GM12878 (cell line): ENCODE measurements at regions of chr11 and their contacts with region 1.

Region 1: DNA sequence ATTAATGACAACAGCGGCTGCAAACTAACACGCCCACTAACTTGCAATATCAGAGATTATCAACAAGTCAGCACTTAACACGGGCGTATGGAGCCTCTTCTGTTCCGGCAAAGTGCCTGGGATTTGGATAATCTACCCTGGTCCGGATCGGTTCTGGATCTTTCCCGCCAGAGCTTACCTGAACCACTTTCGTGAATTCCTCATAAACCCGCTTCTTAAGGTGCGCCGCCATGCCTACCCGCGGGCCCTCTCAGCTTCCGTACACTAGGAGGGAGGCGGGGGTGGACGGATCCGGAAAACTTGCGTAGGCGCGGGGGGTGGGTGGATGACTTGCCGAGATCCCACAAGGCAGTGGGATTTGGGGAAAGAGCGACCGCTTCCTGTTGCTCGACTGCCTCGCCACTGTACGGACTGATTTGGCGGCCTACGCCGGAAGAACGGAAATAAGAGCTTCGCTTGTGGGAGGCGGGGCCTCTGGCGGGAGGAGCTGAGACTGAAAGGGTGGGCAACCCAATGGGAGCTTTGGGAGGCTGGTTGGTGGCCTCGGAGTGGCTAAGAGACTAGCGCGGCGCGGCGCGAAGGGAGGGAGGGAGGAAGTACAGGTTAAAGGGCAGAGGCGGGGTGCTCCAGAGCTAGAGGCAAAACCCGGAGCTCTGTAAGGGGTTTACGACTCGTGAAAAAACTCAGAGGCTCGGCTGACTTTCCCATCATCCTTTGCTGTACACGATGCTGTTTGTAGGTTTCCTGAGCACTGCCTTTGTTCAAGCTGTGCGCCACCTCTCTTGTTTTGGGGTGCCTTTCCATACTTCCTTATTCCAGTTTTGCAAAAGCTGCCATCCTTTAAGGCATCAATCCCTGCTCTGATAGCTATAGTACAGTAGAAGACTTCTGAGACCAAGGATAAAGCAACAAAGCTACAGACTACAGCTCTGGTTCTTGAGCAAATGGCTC is at the start of gene INTS4:
- DNase-seq: peak; percentile 99
- ATAC-seq: peak; percentile 99
- H3K4me3 ChIP-seq: peak within 1 kb of the TSS; percentile 95
- H3K27ac ChIP-seq: peak within 1 kb of the TSS; percentile 77
- H3K4me1 ChIP-seq: peaks cover 3% of the 10 kb centered on the region; the same call in 1 of the 2 replicates
- H3K27me3 ChIP-seq: no peaks in the 10 kb centered on the region
- CTCF ChIP-seq: no peak
- EP300 ChIP-seq: 0 out of 4 replicates have a peak, but pooled peaks of 1 of the 2 experiments have one; percentile 28
- POLR2A ChIP-seq: peak; percentile 89
- RAD21 ChIP-seq: no peak
- polyA plus RNA-seq, gene INTS4: 20.2 to 24.3 TPM

Region 2: GRCh38 chr11:77776455-77776854 is 218.2 kb before region 1 on chr11:
- CTCF ChIA-PET with region 1: interaction called, 14 read pairs
- POLR2A ChIA-PET with region 1: no interaction called
- RAD21 ChIA-PET with region 1: interaction called, 4 read pairs
- SMC1A ChIA-PET with region 1: interaction called, 11 read pairs
- in situ Hi-C with region 1: no loop called
- intact Hi-C with region 1: no loop called
- DNase-seq: no peak
- ATAC-seq: peak; percentile 62
- H3K4me3 ChIP-seq: no peak overlapping the region
- H3K27ac ChIP-seq: no peak overlapping the region
- H3K4me1 ChIP-seq: no peaks in the 10 kb centered on the region
- H3K27me3 ChIP-seq: no peaks in the 10 kb centered on the region
- CTCF ChIP-seq: peak; percentile 3 to 46 (median 18); a peak in 4 of 6 replicates
- EP300 ChIP-seq: no peak
- POLR2A ChIP-seq: no peak
- RAD21 ChIP-seq: peak; percentile 50

Region 3: GRCh38 chr11:77820563-77821348 is 173.9 kb before region 1 on chr11 and contains the starts of genes AAMDC and RSF1:
- CTCF ChIA-PET with region 1: interaction called, 6 read pairs
- POLR2A ChIA-PET with region 1: interaction called, 5 read pairs
- RAD21 ChIA-PET with region 1: interaction called, 10 read pairs
- SMC1A ChIA-PET with region 1: interaction called, 6 read pairs
- in situ Hi-C with region 1: loop called (anchors 5 kb)
- intact Hi-C with region 1: loop called (anchors 2 kb)
- DNase-seq: peak; percentile 94
- ATAC-seq: peak; percentile 91
- H3K4me3 ChIP-seq: peak within 1 kb of the TSS; percentile 97
- H3K27ac ChIP-seq: peak within 1 kb of the TSS; percentile 89
- H3K4me1 ChIP-seq: peaks cover 3% of the 10 kb centered on the region; the same call in 1 of the 2 replicates
- H3K27me3 ChIP-seq: no peaks in the 10 kb centered on the region
- CTCF ChIP-seq: peak; percentile 67 to 82 (median 77)
- EP300 ChIP-seq: peak in 1 of 2 experiments; percentile 15; a peak in 1 of 4 replicates
- POLR2A ChIP-seq: peak; percentile 82
- RAD21 ChIP-seq: peak; percentile 55
- polyA plus RNA-seq, gene AAMDC: 37.1 to 38.3 TPM
- polyA plus RNA-seq, gene RSF1: 9.0 to 25.4 TPM

Region 4: GRCh38 chr11:77865805-77866204 is 128.9 kb before region 1 on chr11:
- CTCF ChIA-PET with region 1: no interaction called
- POLR2A ChIA-PET with region 1: no interaction called
- RAD21 ChIA-PET with region 1: no interaction called
- SMC1A ChIA-PET with region 1: no interaction called
- in situ Hi-C with region 1: no loop called
- intact Hi-C with region 1: no loop called
- DNase-seq: no peak
- ATAC-seq: no peak
- H3K4me3 ChIP-seq: no peak overlapping the region
- H3K27ac ChIP-seq: no peak overlapping the region
- H3K4me1 ChIP-seq: no peaks in the 10 kb centered on the region
- H3K27me3 ChIP-seq: no peaks in the 10 kb centered on the region
- CTCF ChIP-seq: no peak
- EP300 ChIP-seq: no peak
- POLR2A ChIP-seq: no peak
- RAD21 ChIP-seq: no peak

Region 5: DNA sequence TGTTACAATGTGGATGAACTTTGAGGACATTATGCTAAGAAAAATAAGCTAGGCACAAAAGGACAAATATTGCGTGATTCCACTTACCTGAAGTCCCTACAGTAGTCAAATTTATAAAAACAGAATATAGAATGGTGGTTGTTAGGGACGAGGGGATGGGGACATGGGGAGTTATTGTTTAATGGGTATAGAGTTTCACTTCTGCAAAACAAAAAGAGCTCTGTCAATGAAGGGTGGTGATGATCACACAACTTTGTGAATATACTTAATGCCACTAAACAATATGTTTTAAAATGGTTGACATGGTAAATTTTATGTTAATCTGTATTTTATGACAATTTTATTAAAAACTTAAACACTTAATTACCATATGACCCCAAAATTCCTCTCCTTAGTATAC is 26.4 kb before region 1 on chr11:
- CTCF ChIA-PET with region 1: interaction called, 8 read pairs
- POLR2A ChIA-PET with region 1: no interaction called
- RAD21 ChIA-PET with region 1: interaction called, 14 read pairs
- SMC1A ChIA-PET with region 1: interaction called, 3 read pairs
- in situ Hi-C with region 1: no loop called
- intact Hi-C with region 1: no loop called
- DNase-seq: peak; percentile 7
- ATAC-seq: peak; percentile 95
- H3K4me3 ChIP-seq: no peak overlapping the region
- H3K27ac ChIP-seq: no peak overlapping the region
- H3K4me1 ChIP-seq: no peaks in the 10 kb centered on the region; the same call in 1 of the 2 replicates
- H3K27me3 ChIP-seq: no peaks in the 10 kb centered on the region
- CTCF ChIP-seq: no peak
- EP300 ChIP-seq: no peak
- POLR2A ChIP-seq: no peak
- RAD21 ChIP-seq: no peak

Region 6: GRCh38 chr11:78045851-78046485 is 51.3 kb after region 1 on chr11:
- CTCF ChIA-PET with region 1: interaction called, 37 read pairs
- POLR2A ChIA-PET with region 1: interaction called, 3 read pairs
- RAD21 ChIA-PET with region 1: interaction called, 15 read pairs
- SMC1A ChIA-PET with region 1: interaction called, 8 read pairs
- in situ Hi-C with region 1: no loop called
- intact Hi-C with region 1: no loop called
- DNase-seq: no peak
- ATAC-seq: peak; percentile 99
- H3K4me3 ChIP-seq: peak overlapping the region; percentile 61; the same call in 1 of the 2 replicates
- H3K27ac ChIP-seq: no peak overlapping the region
- H3K4me1 ChIP-seq: no peaks in the 10 kb centered on the region
- H3K27me3 ChIP-seq: no peaks in the 10 kb centered on the region
- CTCF ChIP-seq: peak; percentile 96 to 99 (median 98)
- EP300 ChIP-seq: no peak
- POLR2A ChIP-seq: no peak
- RAD21 ChIP-seq: peak; percentile 83

Region 7: DNA sequence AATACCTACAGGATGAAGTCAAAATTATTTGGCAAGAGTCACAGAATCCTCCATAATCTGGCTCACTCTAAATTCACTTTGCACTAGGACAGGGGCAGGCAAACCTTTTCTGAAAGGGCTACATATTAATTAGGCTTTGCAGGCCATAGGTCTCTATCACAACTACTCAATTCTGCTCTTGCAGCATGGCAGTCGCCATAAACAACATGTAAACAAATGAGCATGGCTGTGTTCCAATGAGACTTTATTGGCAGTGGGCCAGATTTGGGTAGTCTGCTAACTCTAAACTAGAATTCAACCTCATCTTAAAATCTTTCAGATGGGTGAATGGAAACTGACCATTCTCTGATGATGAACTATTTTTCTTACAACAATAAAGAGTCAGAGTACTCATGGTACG is 74.8 kb after region 1 on chr11:
- CTCF ChIA-PET with region 1: no interaction called
- POLR2A ChIA-PET with region 1: no interaction called
- RAD21 ChIA-PET with region 1: no interaction called
- SMC1A ChIA-PET with region 1: no interaction called
- in situ Hi-C with region 1: no loop called
- intact Hi-C with region 1: no loop called
- DNase-seq: no peak
- ATAC-seq: no peak
- H3K4me3 ChIP-seq: no peak overlapping the region
- H3K27ac ChIP-seq: no peak overlapping the region
- H3K4me1 ChIP-seq: no peaks in the 10 kb centered on the region
- H3K27me3 ChIP-seq: no peaks in the 10 kb centered on the region
- CTCF ChIP-seq: no peak
- EP300 ChIP-seq: no peak
- POLR2A ChIP-seq: no peak
- RAD21 ChIP-seq: no peak

Region 8: GRCh38 chr11:78188286-78189173 is 193.8 kb after region 1 on chr11 and contains the starts of genes KCTD21 and USP35:
- CTCF ChIA-PET with region 1: no interaction called
- POLR2A ChIA-PET with region 1: interaction called, 3 read pairs
- RAD21 ChIA-PET with region 1: interaction called, 6 read pairs
- SMC1A ChIA-PET with region 1: no interaction called
- in situ Hi-C with region 1: no loop called
- intact Hi-C with region 1: loop called (anchors 10 kb)
- DNase-seq: peak; percentile 85
- ATAC-seq: peak; percentile 98
- H3K4me3 ChIP-seq: peak within 1 kb of the TSS; percentile 82
- H3K27ac ChIP-seq: 0 out of 2 replicates have a peak within 1 kb of the TSS, but pooled peaks have one; percentile 7
- H3K4me1 ChIP-seq: peaks cover 14% of the 10 kb centered on the region
- H3K27me3 ChIP-seq: no peaks in the 10 kb centered on the region
- CTCF ChIP-seq: no peak
- EP300 ChIP-seq: no peak
- POLR2A ChIP-seq: peak; percentile 80
- RAD21 ChIP-seq: no peak
- polyA plus RNA-seq, gene KCTD21: 0.63 to 0.73 TPM
- polyA plus RNA-seq, gene USP35: 0.13 TPM in 1 of 2 experiments, not detected in the other